ENCODE measurements at regions of chr3 and their contacts with region 1.

Region 1: GRCh38 chr3:42090973-42091731 is at the start of gene TRAK1:
- DNase-seq: no peak
- ATAC-seq: peak; percentile 90
- total RNA-seq, gene TRAK1: 50.2 TPM

Region 2: GRCh38 chr3:42012935-42013690 is 78.0 kb before region 1 on chr3:
- intact Hi-C with region 1: loop called (anchors 10 kb)
- DNase-seq: peak; percentile 83
- ATAC-seq: peak; percentile 84

Region 3: DNA sequence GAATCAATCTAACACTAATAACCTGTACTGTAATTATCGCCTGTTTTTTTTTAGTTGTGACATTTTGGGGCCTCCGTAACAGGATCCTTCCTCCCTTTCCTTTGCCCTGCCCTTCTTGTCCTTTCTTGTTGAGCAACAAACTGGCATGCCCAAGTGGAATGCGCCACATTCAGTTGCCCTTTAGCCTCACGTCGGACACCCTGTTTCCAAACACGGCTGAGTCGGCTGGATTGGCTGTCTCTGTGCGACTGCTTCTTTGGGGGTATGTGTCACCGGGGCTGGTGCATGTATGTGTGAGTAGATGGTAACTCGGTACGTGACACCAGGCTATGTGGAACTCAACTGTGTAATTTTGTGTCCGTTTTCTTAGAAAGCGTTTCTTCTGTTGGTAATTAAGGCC is 24.1 kb after region 1 on chr3:
- intact Hi-C with region 1: no loop called
- DNase-seq: no peak
- ATAC-seq: no peak